Ascending aorta (tissue), 2 donors: ENCODE measurements at regions of chr7 and their contacts with region 1.

Region 1: GRCh38 chr7:117385340-117386109 is 41.8 kb downstream of the ASZ1 start:
- DNase-seq: no peak
- H3K4me3 ChIP-seq: no peak overlapping the region
- H3K27ac ChIP-seq: no peak overlapping the region
- H3K4me1 ChIP-seq: no peaks in the 10 kb centered on the region
- H3K27me3 ChIP-seq: no peaks in the 10 kb centered on the region
- CTCF ChIP-seq: peak in 2 of 3 experiments; percentile 20 to 52

Region 2: DNA sequence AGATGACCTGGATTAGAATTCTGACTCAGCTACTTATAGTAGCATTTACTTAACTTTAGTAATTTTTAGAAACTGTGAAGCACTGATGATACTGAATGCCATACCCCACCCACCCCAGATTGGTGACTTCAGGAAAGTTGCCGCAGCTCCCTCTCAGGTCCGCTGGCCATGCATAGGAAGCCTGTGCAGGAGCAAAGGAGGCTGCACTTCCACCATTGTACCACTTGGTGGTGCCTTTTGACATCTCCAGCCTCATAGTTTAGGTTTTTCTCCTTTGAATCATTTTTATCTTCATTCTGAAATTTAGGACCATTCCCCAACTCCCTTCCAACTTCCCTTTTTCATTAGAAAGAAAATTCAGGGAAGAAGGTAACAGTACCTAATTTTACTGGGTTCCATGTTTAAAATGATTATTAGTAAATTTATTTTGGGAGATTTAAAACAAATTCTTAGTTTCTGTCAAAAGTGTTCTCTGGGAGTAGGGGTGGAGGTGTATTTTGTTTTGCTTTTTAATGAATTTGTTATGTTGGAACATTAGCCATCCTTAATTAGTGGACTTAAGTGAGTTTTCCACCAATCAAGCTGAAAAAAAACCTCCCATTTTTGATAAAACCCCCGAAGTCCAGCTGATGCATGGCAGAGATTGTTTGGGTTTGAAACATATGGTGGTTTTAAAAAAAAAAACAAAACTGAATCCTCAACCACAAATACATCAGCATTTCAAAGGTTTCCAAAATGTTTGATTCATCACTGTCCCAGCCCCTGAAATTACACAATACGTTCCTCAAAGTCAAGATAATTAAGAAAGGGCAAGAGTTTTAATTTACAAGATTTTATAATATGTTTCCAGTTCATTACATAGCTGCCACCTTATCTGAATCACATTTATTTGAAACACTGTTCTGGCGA is 172.3 kb before region 1 on chr7:
- intact Hi-C with region 1: loop called (anchors 2 kb)
- DNase-seq: peak in 1 of 2 donors; percentile 65
- H3K4me3 ChIP-seq: no peak overlapping the region
- H3K27ac ChIP-seq: no peak overlapping the region
- H3K4me1 ChIP-seq: no peaks in the 10 kb centered on the region
- H3K27me3 ChIP-seq: no peaks in the 10 kb centered on the region
- CTCF ChIP-seq: peak; percentile 47 to 89 (median 86)